Heart right ventricle (tissue), 16 donors: ENCODE measurements at regions of chr15 and their contacts with region 1.

Region 1: GRCh38 chr15:63752075-63752684 is 81.6 kb downstream of the HERC1 start:
- DNase-seq: peak in 1 of 2 donors; percentile 60
- ATAC-seq: peak; percentile 52 to 86 (median 81)
- H3K4me3 ChIP-seq: no peak overlapping the region
- H3K27ac ChIP-seq: no peak overlapping the region
- H3K4me1 ChIP-seq: peaks cover 0 to 9% (median 0%) of the 10 kb centered on the region in 9 donors
- H3K27me3 ChIP-seq: no peaks in the 10 kb centered on the region
- CTCF ChIP-seq: peak; percentile 51 to 85 (median 73)

Region 2: GRCh38 chr15:63826528-63826927 is 74.3 kb after region 1 on chr15:
- intact Hi-C with region 1: loop called in 2 of 10 experiments (anchors 10 kb)
- DNase-seq: no peak
- ATAC-seq: no peak
- H3K4me3 ChIP-seq: no peak overlapping the region
- H3K27ac ChIP-seq: no peak overlapping the region
- H3K4me1 ChIP-seq: peaks cover 2 to 74% (median 32%) of the 10 kb centered on the region in 9 donors
- H3K27me3 ChIP-seq: no peaks in the 10 kb centered on the region
- CTCF ChIP-seq: peak in 5 of 9 donors; percentile 19 to 43 (median 34)

Region 3: GRCh38 chr15:63891079-63891767 is 139.0 kb after region 1 on chr15:
- intact Hi-C with region 1: loop called (anchors 1 to 5 kb)
- DNase-seq: peak; percentile 81
- ATAC-seq: peak; percentile 70 to 91 (median 77)
- H3K4me3 ChIP-seq: no peak overlapping the region
- H3K27ac ChIP-seq: peak overlapping the region in 1 of 10 donors; percentile 36
- H3K4me1 ChIP-seq: peaks cover 0 to 76% (median 21%) of the 10 kb centered on the region in 9 donors
- H3K27me3 ChIP-seq: no peaks in the 10 kb centered on the region
- CTCF ChIP-seq: peak; percentile 80 to 92 (median 90)